PC-3 (cell line): ENCODE measurements at regions of chr2 and their contacts with region 1.

Region 1: DNA sequence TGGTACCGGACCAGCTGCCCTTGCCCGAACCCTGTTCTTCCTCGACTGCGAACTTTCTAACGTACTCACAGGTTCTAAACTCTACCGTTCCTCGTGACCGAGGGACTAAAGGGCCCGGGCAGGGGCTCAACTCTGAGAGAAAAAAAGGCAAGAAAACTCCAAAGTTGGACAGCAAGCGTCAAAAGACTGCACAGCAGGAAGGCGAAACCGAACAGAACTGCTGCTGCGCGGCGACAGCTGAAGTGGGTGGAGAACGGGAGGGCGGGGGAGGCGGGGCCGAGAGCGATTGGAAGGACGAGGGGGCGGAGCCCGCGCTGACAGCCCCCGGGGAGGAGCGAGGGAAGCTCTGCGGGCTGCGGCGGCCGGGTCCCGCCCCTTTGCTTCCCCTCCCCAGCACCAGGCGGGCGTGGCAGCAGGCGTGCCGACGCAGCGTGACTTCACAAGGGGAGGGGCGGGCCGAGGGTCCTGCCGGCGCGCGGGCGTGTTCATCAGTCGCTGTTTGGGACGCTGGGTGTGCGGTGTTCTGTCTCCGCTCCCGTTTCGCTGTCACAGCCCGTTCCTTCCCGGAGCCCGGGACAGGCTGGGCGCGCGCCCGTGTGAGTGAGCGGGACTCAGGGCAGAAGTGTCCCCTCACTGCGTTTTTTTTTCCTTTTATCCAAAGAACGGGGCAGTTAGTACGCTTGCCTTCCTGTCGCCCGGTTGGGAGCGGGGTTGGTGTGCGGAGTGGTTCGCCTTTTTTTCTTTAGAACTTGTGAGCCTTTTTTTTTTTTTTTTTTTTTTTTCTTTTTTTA is at the start of gene NABP1:
- DNase-seq: peak; percentile 97
- ATAC-seq: peak; percentile 82
- H3K4me3 ChIP-seq: peak within 1 kb of the TSS; percentile 80
- H3K27ac ChIP-seq: peak within 1 kb of the TSS; percentile 93
- H3K4me1 ChIP-seq: peaks cover 23% of the 10 kb centered on the region
- H3K27me3 ChIP-seq: no peaks in the 10 kb centered on the region
- CTCF ChIP-seq: no peak
- total RNA-seq, gene NABP1: 45.4 and 56.8 TPM in 2 replicates

Region 2: GRCh38 chr2:191171708-191172355 is 506.0 kb before region 1 on chr2:
- CTCF ChIA-PET with region 1: no interaction called
- POLR2A ChIA-PET with region 1: no interaction called
- intact Hi-C with region 1: loop called (anchors 10 kb)
- DNase-seq: peak; percentile 97
- ATAC-seq: peak; percentile 70
- H3K4me3 ChIP-seq: peak overlapping the region; percentile 30; the same call in 1 of the 2 replicates
- H3K27ac ChIP-seq: peak overlapping the region; percentile 90
- H3K4me1 ChIP-seq: peaks cover 74% of the 10 kb centered on the region
- H3K27me3 ChIP-seq: no peaks in the 10 kb centered on the region
- CTCF ChIP-seq: no peak

Region 3: DNA sequence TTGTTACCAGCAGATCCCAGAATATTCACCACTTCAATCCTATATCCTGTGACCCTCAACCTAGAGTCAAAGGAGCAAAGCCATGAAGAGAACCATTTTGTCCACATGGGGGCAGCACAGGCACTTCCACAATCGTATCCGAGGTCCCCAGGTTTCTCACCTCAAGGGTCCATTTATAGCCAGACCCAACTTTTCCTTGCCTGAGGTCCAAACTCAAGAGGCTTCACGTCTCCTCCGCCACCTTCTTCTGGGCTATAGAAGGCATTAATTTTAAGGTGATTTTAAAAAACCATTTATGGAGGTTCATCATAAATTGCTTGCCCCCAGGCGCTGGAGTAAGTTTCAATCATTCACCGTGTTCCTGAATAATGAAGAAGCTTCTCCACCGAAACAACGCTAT is 111.5 kb before region 1 on chr2:
- CTCF ChIA-PET with region 1: interaction called, 5 read pairs
- POLR2A ChIA-PET with region 1: interaction called, 6 read pairs
- intact Hi-C with region 1: loop called (anchors 1 kb)
- DNase-seq: peak; percentile 92
- ATAC-seq: peak; percentile 73
- H3K4me3 ChIP-seq: no peak overlapping the region
- H3K27ac ChIP-seq: no peak overlapping the region
- H3K4me1 ChIP-seq: peaks cover 31% of the 10 kb centered on the region
- H3K27me3 ChIP-seq: no peaks in the 10 kb centered on the region
- CTCF ChIP-seq: peak; percentile 96

Region 4: DNA sequence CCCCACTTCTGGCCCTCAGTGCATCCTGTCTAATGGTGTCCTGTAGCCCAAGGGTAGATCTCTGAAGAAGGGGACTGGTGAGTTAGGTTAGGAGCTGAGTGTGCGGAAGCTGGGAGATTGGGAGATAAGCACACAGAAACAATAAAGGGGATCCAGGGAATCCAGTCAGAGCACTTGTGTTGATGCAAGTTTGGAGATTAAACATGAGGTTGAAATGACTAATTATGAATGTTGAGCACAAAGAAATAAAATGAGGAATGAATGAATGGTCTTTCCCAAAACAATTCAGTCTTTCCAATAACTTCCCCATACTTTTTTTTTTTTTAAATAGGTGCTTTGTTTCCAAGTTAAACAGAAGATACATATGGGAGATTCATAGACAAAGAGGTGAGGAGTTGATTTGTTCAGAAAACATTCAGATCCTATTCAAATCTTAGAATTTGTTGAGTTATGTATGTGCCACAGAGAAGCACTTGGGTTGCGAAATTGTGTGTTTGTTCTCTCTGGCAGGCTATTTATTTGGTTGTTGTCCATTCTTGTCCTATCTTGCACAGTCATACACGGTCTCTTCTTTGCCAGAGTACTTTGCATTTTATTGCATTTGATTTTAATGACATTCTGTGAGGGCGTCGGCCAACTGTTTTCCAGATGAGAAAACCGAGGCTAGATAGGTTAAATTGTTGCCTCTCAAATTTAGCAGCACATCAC is 31.5 kb before region 1 on chr2:
- CTCF ChIA-PET with region 1: no interaction called
- POLR2A ChIA-PET with region 1: interaction called, 4 read pairs
- intact Hi-C with region 1: loop called (anchors 2 kb)
- DNase-seq: peak; percentile 96
- ATAC-seq: peak; percentile 86
- H3K4me3 ChIP-seq: peak overlapping the region; percentile 31; the same call in 1 of the 2 replicates
- H3K27ac ChIP-seq: peak overlapping the region; percentile 97
- H3K4me1 ChIP-seq: peaks cover 42% of the 10 kb centered on the region
- H3K27me3 ChIP-seq: no peaks in the 10 kb centered on the region
- CTCF ChIP-seq: no peak

Region 5: GRCh38 chr2:191691016-191691735 is 13.3 kb after region 1 on chr2:
- CTCF ChIA-PET with region 1: no interaction called
- POLR2A ChIA-PET with region 1: interaction called, 6 read pairs
- intact Hi-C with region 1: loop called (anchors 1 kb)
- DNase-seq: peak; percentile 92
- ATAC-seq: peak; percentile 45
- H3K4me3 ChIP-seq: no peak overlapping the region
- H3K27ac ChIP-seq: peak overlapping the region; percentile 26
- H3K4me1 ChIP-seq: peaks cover 49% of the 10 kb centered on the region
- H3K27me3 ChIP-seq: no peaks in the 10 kb centered on the region
- CTCF ChIP-seq: peak; percentile 93